Dorsolateral prefrontal cortex (tissue), 120 donors: ENCODE measurements at regions of chr2 and their contacts with region 1.

Region 1: GRCh38 chr2:225668606-225669266 is 269.2 kb downstream of the NYAP2 start:
- DNase-seq: peak in 1 of 10 donors; percentile 11
- H3K4me3 ChIP-seq: no peak overlapping the region
- H3K27ac ChIP-seq: no peak overlapping the region
- H3K27me3 ChIP-seq: no peaks in the 10 kb centered on the region
- CTCF ChIP-seq: peak; percentile 54 to 86 (median 73)

Region 2: DNA sequence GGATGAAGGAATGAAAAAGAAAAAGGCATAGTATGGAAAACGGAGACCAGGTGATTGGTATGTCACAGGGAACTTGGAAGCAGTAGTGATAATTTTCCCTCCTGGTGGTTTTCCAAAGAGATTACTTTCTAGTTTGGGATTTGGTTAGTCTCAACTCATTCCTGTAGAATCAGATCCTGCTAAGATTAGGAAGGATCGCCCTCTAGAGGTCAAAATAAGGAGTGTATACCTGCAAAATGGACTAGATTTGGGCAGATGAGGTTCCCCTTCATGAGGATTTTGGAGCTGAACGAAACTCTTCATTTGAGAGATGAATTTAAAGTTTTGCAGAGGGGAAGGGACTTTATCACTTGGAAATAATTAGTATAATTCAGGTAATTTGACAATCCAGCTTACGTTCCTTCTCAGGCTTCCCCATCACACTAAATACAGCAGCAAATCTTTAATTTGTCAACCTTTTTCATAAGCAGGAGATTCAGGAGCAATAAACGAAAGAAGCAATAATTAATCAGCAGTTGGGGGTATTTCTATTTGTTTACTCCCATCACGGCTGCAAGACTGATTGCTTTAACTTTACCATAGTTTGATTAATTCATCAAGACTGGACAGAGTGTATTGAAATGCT is 1017.8 kb before region 1 on chr2:
- intact Hi-C with region 1: loop called in 1 of 2 experiments (anchors 5 kb)
- DNase-seq: no peak
- H3K4me3 ChIP-seq: peak overlapping the region in 16 of 59 donors; percentile 10 to 43 (median 26)
- H3K27ac ChIP-seq: no peak overlapping the region
- H3K27me3 ChIP-seq: peaks cover 0 to 2% (median 0%) of the 10 kb centered on the region in 45 donors
- CTCF ChIP-seq: peak; percentile 72 to 96 (median 85)